Tibial artery (tissue), 4 donors: ENCODE measurements at regions of chr15 and their contacts with region 1.

Region 1: DNA sequence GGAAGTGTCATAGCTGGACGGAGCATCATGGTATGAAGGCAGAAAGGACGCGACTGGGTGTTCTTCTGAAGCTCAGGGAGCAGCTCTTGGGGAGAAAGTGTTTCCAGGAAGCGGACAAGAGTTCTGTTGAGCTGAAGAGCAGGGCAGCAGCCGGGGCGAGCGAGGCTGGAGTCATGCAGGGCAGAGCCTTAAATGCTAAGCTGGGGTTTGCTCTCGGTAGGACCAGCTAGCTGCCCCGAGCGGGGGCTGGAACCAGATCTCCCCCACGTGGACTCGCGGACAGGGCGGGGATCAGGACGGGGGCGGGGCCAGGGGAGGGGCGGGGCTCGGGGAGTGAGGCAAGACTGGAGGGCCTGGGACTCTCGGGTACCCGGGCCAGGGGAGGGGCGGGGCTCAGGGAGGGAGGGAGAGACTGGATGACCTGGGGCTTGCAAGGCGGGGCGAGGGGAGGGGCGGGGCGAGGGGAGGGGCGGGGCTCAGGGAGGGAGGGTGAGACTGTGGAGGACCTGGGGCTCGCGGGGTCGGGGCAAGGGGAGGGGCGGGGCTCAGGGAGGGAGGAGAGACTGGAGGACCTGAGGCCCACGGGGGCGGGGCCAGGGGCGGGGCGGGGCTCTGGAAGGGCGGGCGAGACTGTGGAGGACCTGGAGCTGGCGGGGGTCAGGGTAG is 486 bp upstream of the FAH start:
- DNase-seq: peak; percentile 98 to 99
- H3K4me3 ChIP-seq: peak overlapping the region; percentile 75 to 85
- H3K27ac ChIP-seq: peak overlapping the region; percentile 94
- H3K4me1 ChIP-seq: peaks cover 0 to 27% (median 17%) of the 10 kb centered on the region in 4 donors
- H3K27me3 ChIP-seq: no peaks in the 10 kb centered on the region
- CTCF ChIP-seq: no peak

Region 2: DNA sequence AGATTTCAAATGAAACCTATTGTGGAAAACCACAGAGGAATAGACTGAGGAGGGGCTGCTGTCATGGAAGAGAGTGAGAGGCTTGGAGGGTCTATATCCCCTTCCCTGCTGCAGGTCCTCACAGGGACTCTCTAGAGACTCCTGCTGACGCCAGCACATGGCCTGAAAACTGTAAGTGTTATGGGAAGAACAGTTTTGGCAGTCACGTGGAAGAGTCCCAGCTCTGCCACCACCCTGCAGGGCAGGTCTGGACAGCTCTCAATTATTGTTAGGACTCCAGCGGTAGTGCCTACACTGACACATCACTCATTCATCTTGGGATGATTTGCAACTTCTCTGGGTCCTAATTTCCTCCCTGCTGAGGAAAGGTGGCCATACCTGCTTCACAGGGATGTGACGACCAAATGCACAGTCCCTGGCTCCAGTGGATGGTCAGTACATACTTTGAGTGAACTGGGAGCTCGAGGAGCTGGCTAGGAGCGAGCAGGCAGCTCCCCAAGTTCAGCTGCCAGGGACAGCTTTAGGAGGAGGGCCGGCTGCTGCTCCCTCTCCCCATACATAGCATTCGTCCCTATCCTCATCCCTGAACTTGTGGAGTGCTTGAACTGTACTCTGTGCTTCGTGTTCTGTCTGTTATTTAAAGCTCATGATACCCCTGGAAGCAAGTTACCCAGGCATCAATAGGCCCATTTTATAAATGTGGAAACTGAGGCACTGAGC is 50.5 kb after region 1 on chr15:
- intact Hi-C with region 1: no loop called
- DNase-seq: no peak
- H3K4me3 ChIP-seq: no peak overlapping the region
- H3K27ac ChIP-seq: no peak overlapping the region
- H3K4me1 ChIP-seq: no peaks in the 10 kb centered on the region
- H3K27me3 ChIP-seq: no peaks in the 10 kb centered on the region
- CTCF ChIP-seq: no peak

Region 3: GRCh38 chr15:82046666-82047452 is 1894.5 kb after region 1 on chr15:
- intact Hi-C with region 1: loop called (anchors 10 kb)
- DNase-seq: peak; percentile 84 to 93
- H3K4me3 ChIP-seq: peak overlapping the region; percentile 79 to 91
- H3K27ac ChIP-seq: peak overlapping the region; percentile 77 to 86
- H3K4me1 ChIP-seq: peaks cover 0 to 28% (median 19%) of the 10 kb centered on the region in 4 donors
- H3K27me3 ChIP-seq: no peaks in the 10 kb centered on the region
- CTCF ChIP-seq: peak; percentile 71 to 76